ENCODE measurements at regions of chr4 and their contacts with region 1.

Region 1: DNA sequence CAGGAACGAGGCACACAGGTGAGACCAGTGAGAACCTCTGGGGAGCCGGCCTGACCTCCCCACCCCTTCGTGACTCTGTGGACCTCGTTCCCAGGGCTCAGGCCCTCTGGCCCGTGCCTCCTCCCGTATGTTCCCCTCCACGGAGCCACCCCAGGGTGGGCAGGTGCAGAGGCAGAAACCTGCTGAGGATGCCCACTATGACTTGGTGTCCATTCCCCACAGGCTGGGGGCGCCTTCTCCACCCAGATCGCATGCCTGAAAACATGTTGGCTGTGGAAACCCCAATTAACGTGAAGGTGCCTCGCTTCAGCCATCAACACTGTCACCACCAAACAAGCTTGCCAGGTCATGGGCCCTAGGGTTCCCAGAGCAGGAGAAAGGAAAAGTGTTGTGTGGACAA is 27.0 kb downstream of the BLOC1S4 start:
- DNase-seq: no peak
- H3K4me3 Mint-ChIP-seq: no peak overlapping the region
- H3K27ac Mint-ChIP-seq: no peak overlapping the region
- H3K4me1 Mint-ChIP-seq: peaks cover 12% of the 10 kb centered on the region
- H3K27me3 Mint-ChIP-seq: no peaks in the 10 kb centered on the region

Region 2: DNA sequence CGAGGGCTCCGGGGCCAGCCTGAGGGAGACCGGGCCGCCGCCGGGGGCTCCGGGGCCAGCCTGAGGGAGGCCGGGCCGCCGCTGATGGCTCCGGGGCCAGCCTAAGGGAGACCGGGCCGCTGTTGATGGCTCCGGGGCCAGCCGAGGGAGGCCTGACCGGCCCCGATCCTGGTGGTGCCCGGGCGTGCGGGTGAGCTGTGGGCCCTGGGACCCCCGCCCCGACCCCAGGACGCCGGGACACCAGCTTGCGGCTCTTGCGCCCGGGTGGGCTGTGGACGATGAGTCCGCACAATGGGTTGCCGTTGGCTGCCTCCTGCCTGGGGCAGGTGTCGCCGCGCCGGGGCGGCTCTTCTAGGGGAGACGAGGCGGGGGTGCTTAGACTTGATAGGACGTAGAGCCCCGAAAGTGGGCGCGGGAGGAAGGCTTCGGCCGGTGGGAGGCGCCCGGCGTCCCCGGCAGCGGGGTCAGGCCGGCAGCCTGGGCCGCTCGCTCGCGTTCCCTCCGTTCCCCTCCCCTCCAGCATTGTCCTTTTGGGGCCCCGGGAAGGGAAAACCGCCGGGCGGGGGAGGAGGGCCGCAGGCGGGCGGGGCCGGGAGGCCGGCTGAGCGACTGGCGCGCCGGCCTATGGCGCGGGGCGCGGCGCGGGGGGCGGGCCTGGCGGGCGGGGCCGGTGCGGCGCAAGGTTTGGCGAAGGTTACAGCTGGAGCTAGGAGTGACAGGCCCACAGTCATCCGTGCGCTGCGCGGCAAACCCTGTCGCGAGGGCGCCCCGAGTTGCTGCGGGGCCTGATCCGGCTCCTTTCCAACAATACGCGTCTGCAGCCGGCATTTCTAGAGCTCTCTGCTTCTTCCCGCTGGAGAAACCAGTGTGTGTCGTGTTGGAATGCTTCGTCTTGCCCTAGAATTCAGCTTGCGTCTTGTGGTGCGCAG is 40.3 kb after region 1 on chr4:
- CTCF ChIA-PET with region 1: no interaction called
- POLR2A ChIA-PET with region 1: no interaction called
- intact Hi-C with region 1: loop called (anchors 2 kb)
- DNase-seq: peak; percentile 94
- H3K4me3 Mint-ChIP-seq: peak overlapping the region; percentile 80
- H3K27ac Mint-ChIP-seq: peak overlapping the region; percentile 77
- H3K4me1 Mint-ChIP-seq: peaks cover 47% of the 10 kb centered on the region
- H3K27me3 Mint-ChIP-seq: no peaks in the 10 kb centered on the region

Measured in activated CD4-positive, alpha-beta memory T cell treated with anti-CD3 and anti-CD28 coated beads for 36 hours (primary cell).